Pancreas (tissue), 10 donors: ENCODE measurements at regions of chr3 and their contacts with region 1.

Region 1: GRCh38 chr3:109784852-109785631 is 447.7 kb upstream of the DPPA4 start:
- DNase-seq: no peak
- ATAC-seq: no peak
- H3K4me3 ChIP-seq: no peak overlapping the region
- H3K27ac ChIP-seq: no peak overlapping the region
- H3K4me1 ChIP-seq: no peaks in the 10 kb centered on the region
- H3K27me3 ChIP-seq: no peaks in the 10 kb centered on the region
- CTCF ChIP-seq: no peak

Region 2: DNA sequence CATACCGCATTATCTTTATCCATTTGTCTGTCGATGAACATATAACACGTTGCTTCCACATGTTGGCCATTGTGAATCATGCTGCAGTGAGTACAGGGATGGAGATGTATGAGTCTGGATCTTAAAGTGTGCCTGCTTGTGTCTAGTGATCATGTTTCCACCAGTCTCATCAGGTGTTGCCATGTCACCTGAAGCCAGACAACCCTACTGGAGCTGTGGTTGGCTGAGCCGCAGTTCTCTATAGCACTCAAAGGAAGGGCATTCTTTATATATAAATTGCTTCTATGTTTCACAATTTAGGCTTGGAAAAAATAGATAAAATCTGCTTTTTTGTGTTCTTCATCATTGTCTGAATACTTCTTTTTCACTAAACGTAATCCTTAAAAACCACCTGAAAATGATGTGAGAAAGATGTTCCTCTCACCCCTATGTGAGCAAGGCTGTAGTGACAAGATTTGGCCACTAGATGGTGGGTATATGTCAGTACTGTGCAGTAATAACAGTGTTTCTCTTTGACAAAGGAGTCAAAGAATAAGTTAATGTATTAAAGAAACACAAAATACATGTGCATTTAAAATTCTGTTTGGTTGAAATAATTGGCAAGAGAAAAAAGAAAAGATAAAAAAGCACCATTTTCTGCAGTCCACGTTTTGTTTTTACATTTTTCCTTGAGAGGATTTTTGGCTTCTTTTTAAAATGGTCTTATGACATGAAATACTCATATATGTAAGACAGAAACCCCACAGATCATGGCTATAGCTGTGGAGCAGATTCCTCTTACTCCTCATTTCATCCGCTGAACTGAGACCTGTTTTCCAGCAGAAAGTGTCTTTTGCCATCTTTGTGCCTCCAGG is 53.2 kb before region 1 on chr3:
- intact Hi-C with region 1: no loop called
- DNase-seq: peak in 3 of 6 donors; percentile 21 to 45 (median 34)
- ATAC-seq: peak in 3 of 4 donors; percentile 86 to 91 (median 88)
- H3K4me3 ChIP-seq: no peak overlapping the region
- H3K27ac ChIP-seq: no peak overlapping the region
- H3K4me1 ChIP-seq: no peaks in the 10 kb centered on the region
- H3K27me3 ChIP-seq: no peaks in the 10 kb centered on the region
- CTCF ChIP-seq: peak; percentile 72 to 87 (median 85)

Region 3: GRCh38 chr3:109910772-109911171 is 125.7 kb after region 1 on chr3:
- intact Hi-C with region 1: loop called in 1 of 3 experiments (anchors 5 kb)
- DNase-seq: no peak
- ATAC-seq: no peak
- H3K4me3 ChIP-seq: no peak overlapping the region
- H3K27ac ChIP-seq: no peak overlapping the region
- H3K4me1 ChIP-seq: no peaks in the 10 kb centered on the region
- H3K27me3 ChIP-seq: no peaks in the 10 kb centered on the region
- CTCF ChIP-seq: no peak